ENCODE measurements at regions of chr3 and their contacts with region 1.

Region 1: GRCh38 chr3:72818092-72818773 is 30.0 kb downstream of the SHQ1 start:
- DNase-seq: peak in 2 of 9 experiments; percentile 6 to 22
- ATAC-seq: no peak
- H3K4me3 ChIP-seq: no peak overlapping the region
- H3K4me3 Mint-ChIP-seq: no peak overlapping the region
- H3K27ac ChIP-seq: no peak overlapping the region
- H3K27ac Mint-ChIP-seq: no peak overlapping the region
- H3K4me1 ChIP-seq: peaks cover 26% of the 10 kb centered on the region
- H3K4me1 Mint-ChIP-seq: peaks cover 8% of the 10 kb centered on the region
- H3K27me3 ChIP-seq: no peaks in the 10 kb centered on the region
- H3K27me3 Mint-ChIP-seq: no peaks in the 10 kb centered on the region
- CTCF ChIP-seq: no peak

Region 2: DNA sequence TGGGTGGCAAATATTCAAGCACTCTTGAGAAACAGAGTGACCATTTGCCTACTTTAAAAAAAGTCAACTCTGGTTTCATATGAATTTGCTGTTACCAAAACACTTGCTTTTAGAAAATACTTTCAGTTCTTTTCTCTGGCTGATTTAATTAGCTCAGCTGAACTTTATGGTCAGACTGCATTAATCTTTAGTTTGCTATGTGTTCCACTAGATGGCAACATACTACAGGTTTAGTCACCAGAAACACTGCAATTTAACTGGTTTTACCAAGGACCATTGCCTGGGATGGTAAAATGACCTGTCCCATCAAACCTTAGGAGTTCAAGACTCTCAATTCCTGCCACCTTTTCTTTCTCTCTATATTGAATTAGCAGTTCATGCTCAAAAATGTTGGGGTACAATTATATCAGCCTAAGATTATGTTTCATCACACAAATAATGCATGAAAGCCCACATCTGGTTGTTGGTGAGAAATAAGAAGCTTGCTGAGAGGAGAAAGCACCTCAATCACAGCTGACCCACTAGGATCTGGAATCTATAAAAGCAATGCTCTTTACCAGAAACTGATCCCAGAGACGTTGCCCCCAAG is 1107.2 kb before region 1 on chr3:
- CTCF ChIA-PET with region 1: interaction called, 14 read pairs
- POLR2A ChIA-PET with region 1: no interaction called
- intact Hi-C with region 1: loop called (anchors 1 kb)
- DNase-seq: peak in 2 of 9 experiments; percentile 59 to 69
- ATAC-seq: peak; percentile 73
- H3K4me3 ChIP-seq: no peak overlapping the region
- H3K4me3 Mint-ChIP-seq: no peak overlapping the region
- H3K27ac ChIP-seq: no peak overlapping the region
- H3K27ac Mint-ChIP-seq: peak overlapping the region; percentile 7
- H3K4me1 ChIP-seq: peaks cover 23% of the 10 kb centered on the region
- H3K4me1 Mint-ChIP-seq: peaks cover 72% of the 10 kb centered on the region
- H3K27me3 ChIP-seq: no peaks in the 10 kb centered on the region
- H3K27me3 Mint-ChIP-seq: no peaks in the 10 kb centered on the region
- CTCF ChIP-seq: peak; percentile 87

Region 3: GRCh38 chr3:71734883-71735282 is 1083.3 kb before region 1 on chr3:
- CTCF ChIA-PET with region 1: interaction called, 4 read pairs
- POLR2A ChIA-PET with region 1: no interaction called
- intact Hi-C with region 1: loop called (anchors 1 to 5 kb)
- DNase-seq: no peak
- ATAC-seq: no peak
- H3K4me3 ChIP-seq: no peak overlapping the region
- H3K4me3 Mint-ChIP-seq: no peak overlapping the region
- H3K27ac ChIP-seq: no peak overlapping the region
- H3K27ac Mint-ChIP-seq: no peak overlapping the region
- H3K4me1 ChIP-seq: peaks cover 4% of the 10 kb centered on the region
- H3K4me1 Mint-ChIP-seq: peaks cover 14% of the 10 kb centered on the region
- H3K27me3 ChIP-seq: no peaks in the 10 kb centered on the region
- H3K27me3 Mint-ChIP-seq: peaks cover 4% of the 10 kb centered on the region
- CTCF ChIP-seq: no peak

Region 4: DNA sequence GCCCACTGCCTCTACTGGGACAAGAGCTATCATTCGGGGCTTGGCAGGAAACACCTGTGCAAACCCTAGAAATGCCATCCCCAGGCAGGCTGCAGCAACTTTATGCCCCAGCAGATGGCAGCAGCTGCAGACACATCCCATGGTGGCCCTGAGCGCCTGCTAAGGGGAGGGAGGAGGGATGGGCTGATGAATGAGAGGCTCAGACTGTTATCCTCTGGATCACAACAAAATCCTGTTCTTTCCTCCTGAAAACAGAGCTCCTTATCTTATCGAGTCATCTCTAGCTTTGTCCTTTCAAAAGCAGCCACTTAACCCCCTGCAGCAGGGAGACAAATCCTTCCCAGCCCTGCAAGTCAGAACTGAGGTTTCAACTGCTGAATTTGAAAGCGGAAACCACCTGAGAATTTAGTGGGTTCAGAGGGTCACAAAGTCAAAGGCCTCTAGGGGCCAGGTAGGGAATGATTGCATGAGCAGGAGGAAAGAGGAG is 942.7 kb before region 1 on chr3:
- CTCF ChIA-PET with region 1: interaction called, 90 read pairs
- POLR2A ChIA-PET with region 1: no interaction called
- intact Hi-C with region 1: loop called (anchors 1 kb)
- DNase-seq: peak; percentile 60 to 84 (median 71)
- ATAC-seq: peak; percentile 99
- H3K4me3 ChIP-seq: no peak overlapping the region
- H3K4me3 Mint-ChIP-seq: no peak overlapping the region
- H3K27ac ChIP-seq: no peak overlapping the region
- H3K27ac Mint-ChIP-seq: no peak overlapping the region
- H3K4me1 ChIP-seq: no peaks in the 10 kb centered on the region
- H3K4me1 Mint-ChIP-seq: peaks cover 12% of the 10 kb centered on the region
- H3K27me3 ChIP-seq: no peaks in the 10 kb centered on the region
- H3K27me3 Mint-ChIP-seq: peaks cover 3% of the 10 kb centered on the region
- CTCF ChIP-seq: peak; percentile 86

Region 5: GRCh38 chr3:71926262-71926600 is 892.0 kb before region 1 on chr3:
- CTCF ChIA-PET with region 1: interaction called, 18 read pairs
- POLR2A ChIA-PET with region 1: no interaction called
- intact Hi-C with region 1: loop called (anchors 1 to 2 kb)
- DNase-seq: peak in 1 of 9 experiments; percentile 27
- ATAC-seq: no peak
- H3K4me3 ChIP-seq: no peak overlapping the region
- H3K4me3 Mint-ChIP-seq: no peak overlapping the region
- H3K27ac ChIP-seq: no peak overlapping the region
- H3K27ac Mint-ChIP-seq: no peak overlapping the region
- H3K4me1 ChIP-seq: no peaks in the 10 kb centered on the region
- H3K4me1 Mint-ChIP-seq: no peaks in the 10 kb centered on the region
- H3K27me3 ChIP-seq: no peaks in the 10 kb centered on the region
- H3K27me3 Mint-ChIP-seq: no peaks in the 10 kb centered on the region
- CTCF ChIP-seq: no peak

Region 6: GRCh38 chr3:72657666-72658065 is 160.6 kb before region 1 on chr3:
- CTCF ChIA-PET with region 1: interaction called, 365 read pairs
- POLR2A ChIA-PET with region 1: no interaction called
- intact Hi-C with region 1: no loop called
- DNase-seq: peak; percentile 9 to 87 (median 58)
- ATAC-seq: peak; percentile 96
- H3K4me3 ChIP-seq: no peak overlapping the region
- H3K4me3 Mint-ChIP-seq: peak overlapping the region; percentile 9
- H3K27ac ChIP-seq: no peak overlapping the region
- H3K27ac Mint-ChIP-seq: no peak overlapping the region
- H3K4me1 ChIP-seq: peaks cover 15% of the 10 kb centered on the region
- H3K4me1 Mint-ChIP-seq: peaks cover 19% of the 10 kb centered on the region
- H3K27me3 ChIP-seq: peaks cover 0 to 2% of the 10 kb centered on the region in 2 experiments
- H3K27me3 Mint-ChIP-seq: peaks cover 5% of the 10 kb centered on the region
- CTCF ChIP-seq: no peak

Region 7: GRCh38 chr3:72738752-72739530 is 79.3 kb before region 1 on chr3:
- CTCF ChIA-PET with region 1: interaction called, 20 read pairs
- POLR2A ChIA-PET with region 1: interaction called, 6 read pairs
- intact Hi-C with region 1: loop called (anchors 2 to 5 kb)
- DNase-seq: peak; percentile 50 to 85 (median 73)
- ATAC-seq: peak; percentile 92
- H3K4me3 ChIP-seq: peak overlapping the region; percentile 56 to 67
- H3K4me3 Mint-ChIP-seq: peak overlapping the region; percentile 89
- H3K27ac ChIP-seq: peak overlapping the region; percentile 69 to 73
- H3K27ac Mint-ChIP-seq: peak overlapping the region; percentile 97
- H3K4me1 ChIP-seq: peaks cover 19% of the 10 kb centered on the region
- H3K4me1 Mint-ChIP-seq: peaks cover 31% of the 10 kb centered on the region
- H3K27me3 ChIP-seq: no peaks in the 10 kb centered on the region
- H3K27me3 Mint-ChIP-seq: no peaks in the 10 kb centered on the region
- CTCF ChIP-seq: no peak

Measured in CD8-positive, alpha-beta T cell (primary cell).